Breast epithelium (tissue), 4 donors: ENCODE measurements at regions of chr5 and their contacts with region 1.

Region 1: GRCh38 chr5:64619609-64620008 is 70.7 kb upstream of the SHISAL2B start:
- DNase-seq: no peak
- H3K4me3 ChIP-seq: no peak overlapping the region
- H3K27ac ChIP-seq: no peak overlapping the region
- H3K4me1 ChIP-seq: no peaks in the 10 kb centered on the region
- H3K27me3 ChIP-seq: no peaks in the 10 kb centered on the region
- CTCF ChIP-seq: no peak
- POLR2A ChIP-seq: no peak

Region 2: GRCh38 chr5:64229163-64229774 is 390.3 kb before region 1 on chr5:
- intact Hi-C with region 1: loop called (anchors 5 kb)
- DNase-seq: no peak
- H3K4me3 ChIP-seq: no peak overlapping the region
- H3K27ac ChIP-seq: no peak overlapping the region
- H3K4me1 ChIP-seq: no peaks in the 10 kb centered on the region
- H3K27me3 ChIP-seq: no peaks in the 10 kb centered on the region
- CTCF ChIP-seq: peak in 2 of 3 donors; percentile 38 to 39
- POLR2A ChIP-seq: no peak